ENCODE measurements at regions of chr6 and their contacts with region 1.

Region 1: GRCh38 chr6:139448051-139448649 is 73.7 kb upstream of the CITED2 start:
- DNase-seq: no peak
- ATAC-seq: no peak
- H3K4me3 ChIP-seq: no peak overlapping the region
- H3K4me3 Mint-ChIP-seq: no peak overlapping the region
- H3K27ac ChIP-seq: no peak overlapping the region
- H3K27ac Mint-ChIP-seq: no peak overlapping the region
- H3K4me1 ChIP-seq: no peaks in the 10 kb centered on the region
- H3K4me1 Mint-ChIP-seq: no peaks in the 10 kb centered on the region
- H3K27me3 ChIP-seq: no peaks in the 10 kb centered on the region
- H3K27me3 Mint-ChIP-seq: no peaks in the 10 kb centered on the region
- CTCF ChIP-seq: no peak

Region 2: GRCh38 chr6:139425780-139426179 is 22.4 kb before region 1 on chr6:
- CTCF ChIA-PET with region 1: interaction called, 3 read pairs
- POLR2A ChIA-PET with region 1: no interaction called
- intact Hi-C with region 1: loop called in 1 of 2 experiments (anchors 2 kb)
- DNase-seq: no peak
- ATAC-seq: no peak
- H3K4me3 ChIP-seq: no peak overlapping the region
- H3K4me3 Mint-ChIP-seq: no peak overlapping the region
- H3K27ac ChIP-seq: no peak overlapping the region
- H3K27ac Mint-ChIP-seq: no peak overlapping the region
- H3K4me1 ChIP-seq: no peaks in the 10 kb centered on the region
- H3K4me1 Mint-ChIP-seq: no peaks in the 10 kb centered on the region
- H3K27me3 ChIP-seq: no peaks in the 10 kb centered on the region
- H3K27me3 Mint-ChIP-seq: peaks cover 12% of the 10 kb centered on the region
- CTCF ChIP-seq: no peak

Region 3: DNA sequence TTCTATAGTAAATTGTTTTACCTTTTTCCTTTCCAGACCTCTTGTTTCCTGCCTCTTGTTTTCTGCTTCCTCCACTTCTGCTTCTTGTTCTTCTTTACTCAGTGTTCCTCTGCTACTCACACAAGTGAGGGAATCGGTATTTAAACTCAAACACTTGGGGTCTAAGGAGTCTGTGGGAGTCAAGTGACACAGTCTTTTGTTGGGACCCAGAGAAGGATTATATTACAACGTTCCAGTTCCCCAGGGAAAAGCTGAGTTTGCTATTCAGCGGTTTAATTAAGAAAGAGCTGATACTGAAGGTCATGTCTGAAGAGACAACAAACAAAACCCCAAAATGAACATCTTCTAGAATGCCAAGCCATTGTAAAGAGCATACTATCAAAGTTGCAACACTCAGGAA is 34.1 kb after region 1 on chr6:
- CTCF ChIA-PET with region 1: no interaction called
- POLR2A ChIA-PET with region 1: no interaction called
- intact Hi-C with region 1: no loop called
- DNase-seq: no peak
- ATAC-seq: no peak
- H3K4me3 ChIP-seq: no peak overlapping the region
- H3K4me3 Mint-ChIP-seq: no peak overlapping the region
- H3K27ac ChIP-seq: no peak overlapping the region
- H3K27ac Mint-ChIP-seq: no peak overlapping the region
- H3K4me1 ChIP-seq: no peaks in the 10 kb centered on the region
- H3K4me1 Mint-ChIP-seq: no peaks in the 10 kb centered on the region
- H3K27me3 ChIP-seq: peaks cover 0 to 3% of the 10 kb centered on the region in 2 experiments
- H3K27me3 Mint-ChIP-seq: no peaks in the 10 kb centered on the region
- CTCF ChIP-seq: no peak

Measured in CD8-positive, alpha-beta T cell (primary cell).